Activated naive CD4-positive, alpha-beta T cell treated with anti-CD3 and anti-CD28 coated beads for 36 hours (primary cell): ENCODE measurements at regions of chr2 and their contacts with region 1.

Region 1: DNA sequence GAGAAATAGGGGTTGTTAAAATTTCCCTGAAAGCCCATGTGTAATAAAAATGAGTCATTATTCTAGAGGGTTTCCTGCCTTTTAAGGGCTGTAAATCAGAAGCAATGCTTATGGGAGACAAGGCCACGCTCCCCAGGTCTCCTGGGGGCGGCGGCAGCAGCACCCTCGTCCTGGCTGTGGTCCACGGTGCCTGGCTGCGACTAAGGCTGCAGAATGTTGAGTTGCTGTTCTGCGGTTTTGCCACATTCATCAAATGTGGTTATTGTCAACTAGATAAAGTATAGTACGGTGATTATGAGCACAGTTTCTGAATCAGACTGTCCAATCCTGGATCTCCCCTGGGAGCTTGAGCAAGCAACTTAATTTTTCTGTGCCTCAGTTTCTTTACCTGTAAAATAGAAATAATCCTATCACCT is 11.9 kb upstream of the AGFG1 start:
- DNase-seq: peak; percentile 85
- H3K4me3 Mint-ChIP-seq: peak overlapping the region; percentile 65
- H3K27ac Mint-ChIP-seq: peak overlapping the region; percentile 99
- H3K4me1 Mint-ChIP-seq: peaks cover 85% of the 10 kb centered on the region
- H3K27me3 Mint-ChIP-seq: no peaks in the 10 kb centered on the region

Region 2: GRCh38 chr2:226791487-226792081 is 668.5 kb before region 1 on chr2:
- CTCF ChIA-PET with region 1: no interaction called
- intact Hi-C with region 1: loop called (anchors 5 kb)
- DNase-seq: peak; percentile 90
- H3K4me3 Mint-ChIP-seq: peak overlapping the region; percentile 83
- H3K27ac Mint-ChIP-seq: peak overlapping the region; percentile 95
- H3K4me1 Mint-ChIP-seq: peaks cover 37% of the 10 kb centered on the region
- H3K27me3 Mint-ChIP-seq: no peaks in the 10 kb centered on the region

Region 3: DNA sequence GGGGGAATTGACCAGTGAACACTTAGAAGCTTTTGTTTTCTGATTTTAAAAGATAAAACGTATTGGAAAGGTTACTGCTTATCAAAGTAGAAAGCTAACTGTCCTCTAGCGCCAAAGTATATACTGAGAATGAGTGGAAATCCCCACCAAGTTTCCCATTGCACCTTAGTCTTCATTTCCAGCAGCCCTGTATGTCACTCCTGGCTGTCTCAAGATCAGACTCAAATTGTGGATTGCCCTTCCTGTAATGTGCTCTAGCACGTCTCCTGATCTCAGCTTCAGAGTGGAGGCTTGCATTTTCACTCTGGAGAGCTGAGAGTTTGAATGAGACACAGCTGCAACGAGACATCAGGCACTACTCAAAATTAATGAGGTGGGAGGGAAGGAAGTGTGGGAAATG is 108.4 kb before region 1 on chr2:
- CTCF ChIA-PET with region 1: no interaction called
- intact Hi-C with region 1: loop called (anchors 2 kb)
- DNase-seq: peak; percentile 45
- H3K4me3 Mint-ChIP-seq: peak overlapping the region; percentile 56
- H3K27ac Mint-ChIP-seq: peak overlapping the region; percentile 90
- H3K4me1 Mint-ChIP-seq: peaks cover 30% of the 10 kb centered on the region
- H3K27me3 Mint-ChIP-seq: no peaks in the 10 kb centered on the region

Region 4: DNA sequence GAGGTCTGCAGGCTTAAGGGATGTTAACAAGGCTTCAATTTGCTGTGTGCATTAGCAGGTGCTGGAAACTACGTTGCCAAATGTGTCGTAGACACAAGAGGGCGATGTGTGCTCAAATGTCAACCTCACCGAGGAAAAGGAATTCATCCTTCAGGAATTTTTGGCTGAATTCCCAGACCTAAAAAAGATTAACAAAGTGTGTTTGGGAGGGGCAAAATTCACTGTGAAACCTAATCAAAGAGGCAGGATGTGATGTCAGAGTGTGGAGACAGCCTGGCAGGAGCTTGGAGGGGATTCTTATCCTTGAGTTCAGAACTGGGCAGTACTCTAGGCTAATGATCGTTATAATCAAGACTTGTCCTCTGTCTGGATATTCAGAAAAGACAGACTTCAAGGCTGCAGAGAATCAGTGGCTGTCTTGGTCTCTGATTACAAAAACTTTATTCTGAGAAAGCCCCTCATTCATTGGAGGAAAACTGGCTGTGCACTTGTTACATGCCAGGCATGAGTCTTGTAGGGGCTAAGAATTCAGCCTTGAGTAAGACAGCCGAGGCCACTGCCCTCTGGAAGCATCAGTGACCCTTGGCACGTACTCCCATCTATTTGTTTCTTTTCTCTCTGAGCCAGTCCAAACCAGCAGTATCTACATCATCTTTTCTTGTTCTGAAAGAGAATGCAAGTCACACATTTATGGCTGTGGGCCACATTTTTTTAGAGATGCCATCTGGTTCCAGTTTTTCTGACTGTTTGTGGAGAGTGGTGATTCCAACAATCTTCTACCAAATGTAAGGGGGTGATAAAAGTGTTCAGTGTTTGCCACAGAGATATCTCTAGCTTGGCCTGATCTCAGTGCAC is 53.7 kb before region 1 on chr2:
- CTCF ChIA-PET with region 1: interaction called, 95 read pairs
- intact Hi-C with region 1: loop called (anchors 1 kb)
- DNase-seq: peak; percentile 53
- H3K4me3 Mint-ChIP-seq: no peak overlapping the region
- H3K27ac Mint-ChIP-seq: peak overlapping the region; percentile 43
- H3K4me1 Mint-ChIP-seq: peaks cover 71% of the 10 kb centered on the region
- H3K27me3 Mint-ChIP-seq: no peaks in the 10 kb centered on the region

Region 5: GRCh38 chr2:227471924-227472264 is 11.8 kb after region 1 on chr2 and contains the start of gene AGFG1:
- CTCF ChIA-PET with region 1: interaction called, 15 read pairs
- intact Hi-C with region 1: loop called (anchors 1 kb)
- DNase-seq: peak; percentile 89
- H3K4me3 Mint-ChIP-seq: peak within 1 kb of the TSS; percentile 93
- H3K27ac Mint-ChIP-seq: peak within 1 kb of the TSS; percentile 93
- H3K4me1 Mint-ChIP-seq: peaks cover 53% of the 10 kb centered on the region
- H3K27me3 Mint-ChIP-seq: no peaks in the 10 kb centered on the region
- total RNA-seq, gene AGFG1: 153 to 157 TPM